HCT116 (cell line): ENCODE measurements at regions of chr3 and their contacts with region 1.

Region 1: DNA sequence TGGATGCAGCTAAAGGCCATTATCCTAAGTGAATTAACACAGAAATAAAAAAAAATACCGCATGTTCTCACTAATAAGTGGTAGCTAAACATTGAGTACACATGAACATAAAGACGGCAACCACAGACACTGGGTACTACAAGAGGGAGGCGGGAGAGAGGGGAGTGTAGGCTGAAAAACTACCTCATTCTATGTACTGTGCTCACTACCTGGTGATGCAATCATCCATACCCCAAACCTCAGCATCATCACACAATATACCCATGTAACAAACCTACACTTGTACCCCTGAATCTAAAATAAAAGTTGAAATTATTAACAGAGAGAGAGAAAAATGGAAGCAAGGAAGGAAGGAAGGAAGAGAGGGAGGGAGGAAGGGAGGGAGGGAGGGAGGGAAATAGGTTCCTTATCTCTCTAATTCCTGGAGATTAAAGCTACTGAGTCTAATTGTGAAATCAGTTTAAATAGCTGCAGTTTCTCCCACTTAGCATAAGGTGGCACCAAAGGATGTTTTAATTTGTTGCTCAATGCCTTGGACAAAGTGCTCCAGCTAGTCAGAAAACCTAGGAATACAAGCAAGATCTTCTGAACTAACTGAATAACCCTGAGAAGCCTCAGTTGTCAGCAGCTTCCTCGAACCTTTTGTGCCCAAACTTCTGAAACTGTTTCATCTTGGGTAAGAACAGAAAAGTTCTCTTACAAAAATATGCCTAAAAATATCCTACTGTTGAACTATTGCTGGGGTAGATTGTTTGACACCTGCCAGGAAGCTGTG is 79.4 kb upstream of the ATP11B start:
- DNase-seq: peak; percentile 60
- ATAC-seq: peak; percentile 79
- H3K4me3 ChIP-seq: no peak overlapping the region
- H3K27ac ChIP-seq: no peak overlapping the region
- H3K4me1 ChIP-seq: no peaks in the 10 kb centered on the region
- H3K27me3 ChIP-seq: no peaks in the 10 kb centered on the region
- CTCF ChIP-seq: peak; percentile 57 to 66 (median 58); a peak in 5 of 6 replicates
- POLR2A ChIP-seq: no peak
- RAD21 ChIP-seq: peak; percentile 91

Region 2: GRCh38 chr3:182837855-182838454 is 124.0 kb after region 1 on chr3:
- CTCF ChIA-PET with region 1: interaction called, 23 read pairs
- POLR2A ChIA-PET with region 1: no interaction called
- RAD21 ChIA-PET with region 1: interaction called, 3 to 5 read pairs
- intact Hi-C with region 1: loop called (anchors 1 kb)
- DNase-seq: no peak
- ATAC-seq: no peak
- H3K4me3 ChIP-seq: no peak overlapping the region
- H3K27ac ChIP-seq: no peak overlapping the region
- H3K4me1 ChIP-seq: peaks cover 0 to under 1% of the 10 kb centered on the region in 2 experiments; a peak in 1 of 4 replicates
- H3K27me3 ChIP-seq: no peaks in the 10 kb centered on the region
- CTCF ChIP-seq: peak; percentile 39 to 55 (median 53); a peak in 5 of 6 replicates
- POLR2A ChIP-seq: no peak
- RAD21 ChIP-seq: peak; percentile 67

Region 3: GRCh38 chr3:183188895-183189462 is 475.0 kb after region 1 on chr3:
- CTCF ChIA-PET with region 1: interaction called, 3 read pairs
- POLR2A ChIA-PET with region 1: no interaction called
- RAD21 ChIA-PET with region 1: interaction called in 1 of 2 experiments, 4 read pairs
- intact Hi-C with region 1: loop called (anchors 10 kb)
- DNase-seq: peak; percentile 23
- ATAC-seq: peak; percentile 92
- H3K4me3 ChIP-seq: no peak overlapping the region
- H3K27ac ChIP-seq: no peak overlapping the region
- H3K4me1 ChIP-seq: no peaks in the 10 kb centered on the region
- H3K27me3 ChIP-seq: no peaks in the 10 kb centered on the region
- CTCF ChIP-seq: peak; percentile 36 to 70 (median 59); a peak in 5 of 6 replicates
- POLR2A ChIP-seq: no peak
- RAD21 ChIP-seq: peak; percentile 43; the same call in 1 of the 2 replicates